Activated CD8-positive, alpha-beta T cell treated with anti-CD3 and anti-CD28 coated beads for 36 hours (primary cell): ENCODE measurements at regions of chr9 and their contacts with region 1.

Region 1: DNA sequence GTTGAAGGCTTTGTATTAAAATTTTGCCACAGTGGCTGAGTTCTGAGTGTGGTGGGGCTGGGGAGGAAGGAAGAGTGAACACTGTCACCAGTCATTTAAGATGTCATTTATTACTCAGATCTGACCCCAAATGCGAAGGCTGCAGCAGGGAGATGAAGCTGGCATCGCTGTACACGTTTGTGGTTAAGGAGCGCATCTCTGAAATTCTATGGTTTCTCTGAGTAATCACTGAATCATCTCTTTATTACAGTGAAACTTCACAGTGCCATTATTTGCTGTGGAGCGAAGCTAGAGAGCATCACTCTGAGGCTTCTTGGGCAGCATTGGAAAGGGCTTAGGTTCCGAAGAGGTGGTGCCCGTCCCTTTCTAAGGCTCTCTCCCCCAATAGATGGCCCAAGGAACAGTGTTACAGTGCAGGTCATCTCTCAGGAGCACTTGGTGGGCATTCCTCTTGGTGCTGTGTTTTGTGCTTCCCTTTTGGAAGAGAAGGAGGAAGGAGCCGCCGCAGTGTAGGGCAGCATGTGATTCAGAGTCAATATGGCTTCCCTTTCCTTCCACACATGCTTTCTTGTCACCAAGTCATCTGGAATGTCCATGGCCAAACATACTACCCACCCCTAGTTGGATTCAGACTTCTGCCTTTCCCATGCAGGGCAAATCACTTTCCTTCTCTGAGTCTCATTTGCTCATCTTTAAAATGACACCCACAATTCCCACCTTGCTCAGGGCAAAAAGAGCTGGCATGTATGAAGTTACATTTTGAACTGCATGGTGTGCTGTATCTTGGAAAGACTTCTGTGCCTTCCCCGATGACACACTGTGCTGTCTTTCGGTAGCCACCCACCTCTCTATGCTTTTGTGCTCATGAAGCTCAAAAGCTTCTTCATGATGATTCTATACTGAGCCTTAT is 9.3 kb upstream of the TEX48 start:
- DNase-seq: peak; percentile 89
- ATAC-seq: peak; percentile 75
- H3K4me3 Mint-ChIP-seq: peak overlapping the region; percentile 44
- H3K27ac Mint-ChIP-seq: peak overlapping the region; percentile 97
- H3K4me1 Mint-ChIP-seq: peaks cover 88% of the 10 kb centered on the region
- H3K27me3 Mint-ChIP-seq: no peaks in the 10 kb centered on the region
- CTCF ChIP-seq: no peak

Region 2: GRCh38 chr9:114718801-114719221 is 27.5 kb after region 1 on chr9:
- CTCF ChIA-PET with region 1: interaction called, 10 read pairs
- POLR2A ChIA-PET with region 1: interaction called, 55 read pairs
- intact Hi-C with region 1: loop called (anchors 2 kb)
- DNase-seq: peak; percentile 98
- ATAC-seq: peak; percentile 95
- H3K4me3 Mint-ChIP-seq: peak overlapping the region; percentile 36
- H3K27ac Mint-ChIP-seq: peak overlapping the region; percentile 92
- H3K4me1 Mint-ChIP-seq: peaks cover 56% of the 10 kb centered on the region
- H3K27me3 Mint-ChIP-seq: peaks cover 4% of the 10 kb centered on the region
- CTCF ChIP-seq: no peak

Region 3: GRCh38 chr9:114738581-114739316 is 47.4 kb after region 1 on chr9:
- CTCF ChIA-PET with region 1: interaction called, 19 read pairs
- POLR2A ChIA-PET with region 1: interaction called, 17 read pairs
- intact Hi-C with region 1: no loop called
- DNase-seq: peak; percentile 80
- ATAC-seq: peak; percentile 71
- H3K4me3 Mint-ChIP-seq: no peak overlapping the region
- H3K27ac Mint-ChIP-seq: peak overlapping the region; percentile 94
- H3K4me1 Mint-ChIP-seq: peaks cover 53% of the 10 kb centered on the region
- H3K27me3 Mint-ChIP-seq: no peaks in the 10 kb centered on the region
- CTCF ChIP-seq: peak; percentile 75

Region 4: GRCh38 chr9:114894801-114895433 is 203.6 kb after region 1 on chr9:
- CTCF ChIA-PET with region 1: interaction called, 8 read pairs
- POLR2A ChIA-PET with region 1: interaction called, 5 read pairs
- intact Hi-C with region 1: loop called (anchors 2 kb)
- DNase-seq: peak; percentile 78
- ATAC-seq: peak; percentile 65
- H3K4me3 Mint-ChIP-seq: no peak overlapping the region
- H3K27ac Mint-ChIP-seq: peak overlapping the region; percentile 86
- H3K4me1 Mint-ChIP-seq: peaks cover 54% of the 10 kb centered on the region
- H3K27me3 Mint-ChIP-seq: no peaks in the 10 kb centered on the region
- CTCF ChIP-seq: no peak

Region 5: DNA sequence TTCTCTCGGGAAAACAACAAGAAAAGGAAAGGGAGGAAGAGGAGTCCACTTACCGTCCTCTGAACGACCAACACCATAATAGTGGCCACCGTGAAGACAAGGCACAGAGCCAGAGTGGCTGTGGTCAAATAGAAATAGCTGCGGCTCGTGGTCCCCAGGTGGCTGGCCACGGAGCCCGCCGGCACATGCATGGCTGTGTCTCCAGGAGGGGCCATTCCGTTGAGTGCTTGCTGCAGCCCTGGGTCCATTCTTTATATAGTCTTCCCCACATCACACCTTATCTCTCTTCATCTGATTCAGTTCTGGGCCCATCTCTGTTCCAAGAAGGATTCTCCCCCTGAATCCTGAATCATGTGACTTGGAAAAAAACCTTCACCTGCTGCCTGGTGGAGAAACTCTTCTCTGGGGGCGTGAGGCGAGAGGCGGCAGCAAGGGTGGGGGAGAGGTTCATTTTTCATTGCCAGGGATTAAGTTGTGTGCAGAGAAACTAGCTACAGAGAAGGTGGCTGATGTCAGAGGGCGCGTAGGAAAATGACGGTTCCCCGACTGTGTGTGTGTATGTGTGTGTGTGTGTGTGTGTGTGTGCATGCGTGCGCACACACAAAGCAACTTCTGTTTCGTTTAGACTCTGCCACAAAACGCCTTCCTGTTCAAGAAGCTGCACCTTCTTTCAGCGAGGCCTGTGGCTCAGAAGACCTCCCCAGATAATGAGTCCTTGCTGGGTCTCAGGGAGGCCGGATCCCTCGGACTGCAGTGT is 238.9 kb after region 1 on chr9 and contains the start of gene TNFSF8:
- CTCF ChIA-PET with region 1: interaction called, 5 read pairs
- POLR2A ChIA-PET with region 1: interaction called, 29 read pairs
- intact Hi-C with region 1: no loop called
- DNase-seq: peak; percentile 91
- ATAC-seq: peak; percentile 87
- H3K4me3 Mint-ChIP-seq: peak within 1 kb of the TSS; percentile 89
- H3K27ac Mint-ChIP-seq: peak within 1 kb of the TSS; percentile 98
- H3K4me1 Mint-ChIP-seq: peaks cover 47% of the 10 kb centered on the region
- H3K27me3 Mint-ChIP-seq: no peaks in the 10 kb centered on the region
- CTCF ChIP-seq: no peak
- total RNA-seq, gene TNFSF8: 21.7 to 23.9 TPM